Caco-2 (cell line): ENCODE measurements at regions of chr1 and their contacts with region 1.

Region 1: GRCh38 chr1:983799-984473 is 2.0 kb upstream of the PERM1 start:
- DNase-seq: peak in 1 of 2 experiments; percentile 73
- H3K4me3 ChIP-seq: no peak overlapping the region
- H3K4me3 Mint-ChIP-seq: no peak overlapping the region
- H3K27ac Mint-ChIP-seq: no peak overlapping the region
- H3K4me1 ChIP-seq: no peaks in the 10 kb centered on the region
- H3K4me1 Mint-ChIP-seq: no peaks in the 10 kb centered on the region
- H3K27me3 ChIP-seq: no peaks in the 10 kb centered on the region
- H3K27me3 Mint-ChIP-seq: no peaks in the 10 kb centered on the region
- CTCF ChIP-seq: peak; percentile 91 to 93

Region 2: GRCh38 chr1:1059494-1060280 is 75.8 kb after region 1 on chr1:
- CTCF ChIA-PET with region 1: interaction called, 6 read pairs
- POLR2A ChIA-PET with region 1: no interaction called
- intact Hi-C with region 1: loop called (anchors 5 kb)
- DNase-seq: peak; percentile 86 to 92
- H3K4me3 ChIP-seq: peak overlapping the region; percentile 64
- H3K4me3 Mint-ChIP-seq: peak overlapping the region; percentile 80
- H3K27ac Mint-ChIP-seq: no peak overlapping the region
- H3K4me1 ChIP-seq: peaks cover 31% of the 10 kb centered on the region
- H3K4me1 Mint-ChIP-seq: peaks cover 7% of the 10 kb centered on the region
- H3K27me3 ChIP-seq: no peaks in the 10 kb centered on the region
- H3K27me3 Mint-ChIP-seq: no peaks in the 10 kb centered on the region
- CTCF ChIP-seq: no peak

Region 3: DNA sequence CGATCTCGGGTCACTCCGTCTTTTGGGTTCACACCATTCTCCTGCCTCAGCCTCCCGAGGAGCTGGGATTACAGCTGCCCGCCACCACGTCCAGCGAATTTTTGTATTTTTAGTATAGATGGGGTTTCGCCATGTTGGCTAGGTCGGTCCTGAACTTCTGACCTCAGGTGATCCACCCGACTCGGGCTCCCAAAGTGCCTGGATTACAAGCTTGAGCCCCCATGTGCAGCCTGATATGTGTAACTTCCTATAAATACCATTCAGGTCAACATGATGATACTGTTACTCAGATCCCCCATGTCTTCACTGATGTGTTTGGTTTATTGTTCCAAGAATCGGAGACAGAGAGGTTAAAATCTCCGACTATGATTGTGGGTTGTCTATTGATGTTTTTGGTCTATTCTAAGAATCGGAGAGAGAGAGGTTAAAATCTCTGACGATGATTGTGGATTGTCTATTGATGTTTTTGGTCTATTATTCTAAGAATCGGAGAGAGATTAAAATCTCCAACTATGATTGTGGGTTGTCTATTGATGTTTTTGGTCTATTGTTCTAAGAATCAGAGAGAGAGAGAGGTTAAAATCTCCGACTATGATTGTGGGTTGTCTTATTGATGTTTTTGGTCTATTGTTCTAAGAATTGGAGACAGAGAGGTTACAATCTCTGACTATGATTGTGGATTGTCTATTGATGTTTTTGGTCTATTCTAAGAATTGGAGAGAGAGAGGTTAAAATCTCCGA is 114.9 kb after region 1 on chr1:
- CTCF ChIA-PET with region 1: no interaction called
- POLR2A ChIA-PET with region 1: no interaction called
- intact Hi-C with region 1: no loop called
- DNase-seq: no peak
- H3K4me3 ChIP-seq: no peak overlapping the region
- H3K4me3 Mint-ChIP-seq: no peak overlapping the region
- H3K27ac Mint-ChIP-seq: no peak overlapping the region
- H3K4me1 ChIP-seq: no peaks in the 10 kb centered on the region
- H3K4me1 Mint-ChIP-seq: no peaks in the 10 kb centered on the region
- H3K27me3 ChIP-seq: no peaks in the 10 kb centered on the region
- H3K27me3 Mint-ChIP-seq: no peaks in the 10 kb centered on the region
- CTCF ChIP-seq: no peak

Region 4: GRCh38 chr1:1291548-1292441 is 307.9 kb after region 1 on chr1:
- CTCF ChIA-PET with region 1: no interaction called
- POLR2A ChIA-PET with region 1: no interaction called
- intact Hi-C with region 1: loop called (anchors 2 kb)
- DNase-seq: peak; percentile 70 to 74
- H3K4me3 ChIP-seq: no peak overlapping the region
- H3K4me3 Mint-ChIP-seq: no peak overlapping the region
- H3K27ac Mint-ChIP-seq: no peak overlapping the region
- H3K4me1 ChIP-seq: no peaks in the 10 kb centered on the region; the same call in 1 of the 2 replicates
- H3K4me1 Mint-ChIP-seq: no peaks in the 10 kb centered on the region
- H3K27me3 ChIP-seq: no peaks in the 10 kb centered on the region
- H3K27me3 Mint-ChIP-seq: peaks cover 3% of the 10 kb centered on the region
- CTCF ChIP-seq: peak; percentile 52 to 63